B cell (primary cell): ENCODE measurements at regions of chr16 and their contacts with region 1.

Region 1: GRCh38 chr16:370443-370842 is at the start of gene MRPL28:
- DNase-seq: peak; percentile 95
- ATAC-seq: peak; percentile 99
- H3K4me3 ChIP-seq: peak within 1 kb of the TSS in 3 of 5 experiments; percentile 31 to 47 (median 35)
- H3K4me3 Mint-ChIP-seq: peak within 1 kb of the TSS; percentile 85
- H3K27ac ChIP-seq: peak within 1 kb of the TSS; percentile 59 to 66
- H3K27ac Mint-ChIP-seq: peak within 1 kb of the TSS; percentile 72
- H3K4me1 ChIP-seq: peaks cover 6 to 18% of the 10 kb centered on the region in 2 donors
- H3K4me1 Mint-ChIP-seq: peaks cover 17% of the 10 kb centered on the region
- H3K27me3 ChIP-seq: no peaks in the 10 kb centered on the region
- H3K27me3 Mint-ChIP-seq: no peaks in the 10 kb centered on the region
- CTCF ChIP-seq: no peak
- total RNA-seq, gene MRPL28: 44.3 and 45.1 TPM in 2 replicates

Region 2: GRCh38 chr16:228818-229730 is 141.4 kb before region 1 on chr16 and contains the start of gene LUC7L:
- CTCF ChIA-PET with region 1: no interaction called
- POLR2A ChIA-PET with region 1: no interaction called
- intact Hi-C with region 1: loop called (anchors 1 kb)
- DNase-seq: peak; percentile 94
- ATAC-seq: peak; percentile 91
- H3K4me3 ChIP-seq: peak within 1 kb of the TSS; percentile 74 to 81 (median 79)
- H3K4me3 Mint-ChIP-seq: peak within 1 kb of the TSS; percentile 94
- H3K27ac ChIP-seq: peak within 1 kb of the TSS; percentile 87 to 95
- H3K27ac Mint-ChIP-seq: peak within 1 kb of the TSS; percentile 94
- H3K4me1 ChIP-seq: peaks cover 12 to 33% of the 10 kb centered on the region in 2 donors
- H3K4me1 Mint-ChIP-seq: peaks cover 28% of the 10 kb centered on the region
- H3K27me3 ChIP-seq: no peaks in the 10 kb centered on the region
- H3K27me3 Mint-ChIP-seq: no peaks in the 10 kb centered on the region
- CTCF ChIP-seq: no peak
- total RNA-seq, gene LUC7L: 181 and 191 TPM in 2 replicates

Region 3: GRCh38 chr16:381789-382717 is 11.6 kb after region 1 on chr16 and contains the start of gene PGAP6:
- CTCF ChIA-PET with region 1: interaction called, 8 read pairs
- POLR2A ChIA-PET with region 1: interaction called, 11 read pairs
- intact Hi-C with region 1: loop called (anchors 1 kb)
- DNase-seq: peak; percentile 80
- ATAC-seq: peak; percentile 73
- H3K4me3 ChIP-seq: peak within 1 kb of the TSS; percentile 60 to 99 (median 72)
- H3K4me3 Mint-ChIP-seq: peak within 1 kb of the TSS; percentile 97
- H3K27ac ChIP-seq: peak within 1 kb of the TSS; percentile 55 to 84
- H3K27ac Mint-ChIP-seq: peak within 1 kb of the TSS; percentile 93
- H3K4me1 ChIP-seq: peaks cover 21 to 33% of the 10 kb centered on the region in 2 donors
- H3K4me1 Mint-ChIP-seq: peaks cover 22% of the 10 kb centered on the region
- H3K27me3 ChIP-seq: no peaks in the 10 kb centered on the region
- H3K27me3 Mint-ChIP-seq: no peaks in the 10 kb centered on the region
- CTCF ChIP-seq: no peak
- total RNA-seq, gene PGAP6: 47.4 and 50.8 TPM in 2 replicates

Region 4: DNA sequence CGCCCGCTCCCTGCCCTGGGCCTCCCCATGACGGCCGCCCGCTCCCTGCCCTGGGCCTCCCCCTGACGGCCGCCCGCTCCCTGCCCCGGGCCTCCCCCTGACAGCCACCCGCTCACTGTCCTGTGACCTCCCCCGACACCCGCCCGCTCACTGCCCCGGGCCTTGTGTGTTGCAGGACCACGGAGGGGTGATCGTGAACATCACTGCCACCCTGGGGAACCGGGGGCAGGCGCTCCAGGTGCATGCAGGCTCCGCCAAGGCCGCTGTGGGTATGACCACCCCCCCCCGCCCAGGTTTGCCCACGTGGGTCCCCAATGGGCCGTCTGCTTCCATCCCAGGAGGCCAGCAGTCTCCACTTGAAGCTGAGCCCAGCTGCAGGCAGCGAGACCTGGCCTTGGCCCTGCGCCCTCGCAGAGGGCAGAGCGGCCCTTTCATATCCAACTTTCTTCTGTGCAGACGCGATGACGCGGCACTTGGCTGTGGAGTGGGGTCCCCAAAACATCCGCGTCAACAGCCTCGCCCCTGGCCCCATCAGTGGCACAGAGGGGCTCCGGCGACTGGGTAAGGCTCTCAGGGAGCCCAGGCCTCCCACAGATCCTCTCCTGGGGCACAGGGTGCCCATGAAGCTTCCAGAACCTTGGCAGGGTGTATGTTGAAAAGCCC is 40.2 kb after region 1 on chr16:
- CTCF ChIA-PET with region 1: no interaction called
- POLR2A ChIA-PET with region 1: no interaction called
- intact Hi-C with region 1: no loop called
- DNase-seq: no peak
- ATAC-seq: no peak
- H3K4me3 ChIP-seq: no peak overlapping the region
- H3K4me3 Mint-ChIP-seq: no peak overlapping the region
- H3K27ac ChIP-seq: no peak overlapping the region
- H3K27ac Mint-ChIP-seq: no peak overlapping the region
- H3K4me1 ChIP-seq: no peaks in the 10 kb centered on the region
- H3K4me1 Mint-ChIP-seq: no peaks in the 10 kb centered on the region
- H3K27me3 ChIP-seq: no peaks in the 10 kb centered on the region
- H3K27me3 Mint-ChIP-seq: no peaks in the 10 kb centered on the region
- CTCF ChIP-seq: no peak